CD4-positive, alpha-beta memory T cell (primary cell): ENCODE measurements at regions of chr22 and their contacts with region 1.

Region 1: GRCh38 chr22:47847131-47847890 is 1084.9 kb downstream of the TBC1D22A start:
- DNase-seq: no peak
- H3K4me3 ChIP-seq: no peak overlapping the region
- H3K4me3 Mint-ChIP-seq: no peak overlapping the region
- H3K27ac ChIP-seq: no peak overlapping the region
- H3K27ac Mint-ChIP-seq: no peak overlapping the region
- H3K4me1 ChIP-seq: no peaks in the 10 kb centered on the region
- H3K4me1 Mint-ChIP-seq: no peaks in the 10 kb centered on the region
- H3K27me3 ChIP-seq: no peaks in the 10 kb centered on the region
- H3K27me3 Mint-ChIP-seq: peaks cover 6 to 29% of the 10 kb centered on the region in 2 donors

Region 2: GRCh38 chr22:48118654-48119053 is 271.3 kb after region 1 on chr22:
- CTCF ChIA-PET with region 1: no interaction called
- POLR2A ChIA-PET with region 1: no interaction called
- intact Hi-C with region 1: loop called (anchors 5 kb)
- DNase-seq: no peak
- H3K4me3 ChIP-seq: no peak overlapping the region
- H3K4me3 Mint-ChIP-seq: no peak overlapping the region
- H3K27ac ChIP-seq: no peak overlapping the region
- H3K27ac Mint-ChIP-seq: no peak overlapping the region
- H3K4me1 ChIP-seq: no peaks in the 10 kb centered on the region
- H3K4me1 Mint-ChIP-seq: no peaks in the 10 kb centered on the region
- H3K27me3 ChIP-seq: no peaks in the 10 kb centered on the region
- H3K27me3 Mint-ChIP-seq: peaks cover 12 to 17% of the 10 kb centered on the region in 2 donors